MCF 10A (cell line): ENCODE measurements at regions of chr11 and their contacts with region 1.

Region 1: DNA sequence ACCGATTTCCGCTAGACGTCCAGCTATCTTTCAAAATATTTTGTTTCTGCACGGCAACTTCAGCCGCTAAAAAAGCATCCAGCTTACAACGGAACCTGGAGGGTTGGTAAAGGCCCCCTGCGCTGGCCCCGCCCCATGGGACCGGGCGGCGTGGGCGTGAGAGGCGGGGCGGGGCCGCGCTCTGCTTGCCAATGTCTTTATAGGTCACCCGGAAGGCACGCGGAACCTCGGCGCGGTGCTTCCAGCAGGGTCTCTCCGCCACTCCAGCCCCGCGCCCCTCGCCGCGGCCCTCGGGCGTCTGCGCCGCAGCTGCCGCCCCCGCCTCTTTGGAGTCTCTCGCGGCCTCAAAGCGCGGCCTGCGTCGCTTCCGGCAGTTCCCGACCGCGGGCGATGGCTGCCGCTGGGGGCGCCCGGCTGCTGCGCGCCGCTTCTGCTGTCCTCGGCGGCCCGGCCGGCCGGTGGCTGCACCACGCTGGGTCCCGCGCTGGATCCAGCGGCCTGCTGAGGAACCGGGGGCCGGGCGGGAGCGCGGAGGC is at the start of gene FDX1:
- DNase-seq: peak; percentile 80
- H3K4me3 Mint-ChIP-seq: peak within 1 kb of the TSS; percentile 97
- H3K27ac Mint-ChIP-seq: peak within 1 kb of the TSS; percentile 94
- H3K4me1 Mint-ChIP-seq: peaks cover 41% of the 10 kb centered on the region
- H3K27me3 Mint-ChIP-seq: no peaks in the 10 kb centered on the region
- CTCF ChIP-seq: peak; percentile 46
- total RNA-seq, gene FDX1: 19.9 and 21.1 TPM in 2 replicates

Region 2: GRCh38 chr11:109853156-109853776 is 576.5 kb before region 1 on chr11:
- CTCF ChIA-PET with region 1: no interaction called
- POLR2A ChIA-PET with region 1: no interaction called
- intact Hi-C with region 1: loop called (anchors 2 kb)
- DNase-seq: peak; percentile 73
- H3K4me3 Mint-ChIP-seq: no peak overlapping the region
- H3K27ac Mint-ChIP-seq: no peak overlapping the region
- H3K4me1 Mint-ChIP-seq: peaks cover 8% of the 10 kb centered on the region
- H3K27me3 Mint-ChIP-seq: no peaks in the 10 kb centered on the region
- CTCF ChIP-seq: peak; percentile 63

Region 3: DNA sequence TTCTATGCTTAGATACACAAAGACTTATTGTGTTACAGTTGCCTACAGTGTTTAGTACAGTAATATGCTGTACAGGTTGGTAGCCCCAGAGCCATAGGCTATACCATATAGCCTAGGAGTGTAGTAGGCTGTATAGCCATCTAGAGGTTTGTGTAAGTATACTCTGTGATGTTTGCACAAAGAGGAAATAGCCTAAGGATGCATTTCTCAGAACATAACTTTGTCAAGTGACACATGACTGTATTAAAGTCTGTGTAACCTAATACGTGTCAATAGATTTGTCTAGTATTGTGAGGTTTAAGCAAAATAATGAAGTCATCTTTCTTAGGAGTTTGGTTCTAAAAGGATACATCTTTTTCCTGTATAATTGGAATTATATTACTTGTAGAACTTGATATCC is 331.2 kb before region 1 on chr11:
- CTCF ChIA-PET with region 1: no interaction called
- POLR2A ChIA-PET with region 1: interaction called, 7 read pairs
- intact Hi-C with region 1: loop called (anchors 5 kb)
- DNase-seq: no peak
- H3K4me3 Mint-ChIP-seq: no peak overlapping the region
- H3K27ac Mint-ChIP-seq: peak overlapping the region; percentile 31
- H3K4me1 Mint-ChIP-seq: peaks cover 39% of the 10 kb centered on the region
- H3K27me3 Mint-ChIP-seq: no peaks in the 10 kb centered on the region
- CTCF ChIP-seq: no peak

Region 4: DNA sequence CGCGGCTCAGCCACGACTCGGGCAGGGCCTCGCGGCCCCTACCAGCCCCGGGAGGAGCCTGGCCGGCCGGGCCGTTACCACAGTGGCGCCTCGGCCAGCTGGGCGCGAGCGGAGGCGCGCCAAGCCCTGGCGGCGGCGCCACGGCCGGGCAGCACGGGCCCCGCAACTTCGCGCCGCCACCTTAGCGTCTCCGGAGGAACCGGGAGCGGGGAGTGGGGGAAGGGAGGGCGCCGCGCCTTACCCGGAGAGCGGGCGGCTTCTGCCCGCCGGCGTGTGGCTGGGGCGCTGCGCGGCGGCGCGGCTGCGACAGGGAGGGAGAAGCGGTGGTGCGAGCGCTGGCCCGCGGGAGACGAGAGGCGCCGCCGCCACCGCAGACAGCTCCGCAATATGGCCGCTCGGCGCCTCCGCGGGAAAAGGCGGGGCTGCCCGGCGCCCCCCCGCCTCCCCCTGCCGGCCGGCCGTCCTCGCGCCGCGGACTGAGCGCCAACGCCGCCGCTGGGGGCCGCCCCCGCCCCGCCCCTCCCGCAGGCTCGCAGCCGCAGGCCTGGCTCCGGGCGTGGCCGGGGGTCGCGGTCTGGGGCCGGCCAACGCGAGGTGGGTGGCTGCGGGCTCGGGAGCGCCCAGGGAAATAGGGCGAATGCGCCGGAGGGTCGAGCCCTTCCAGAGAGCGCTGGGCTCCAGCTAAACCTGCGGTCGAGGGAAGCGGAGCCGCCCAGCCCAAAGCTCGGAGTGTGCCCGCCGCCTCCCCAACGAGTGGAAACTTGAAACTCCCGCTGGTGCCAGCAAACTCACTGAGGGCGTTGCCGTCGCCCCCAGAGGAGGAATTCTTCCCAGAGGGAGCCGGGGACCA is 133.3 kb before region 1 on chr11 and contains the start of gene RDX:
- CTCF ChIA-PET with region 1: interaction called, 3 read pairs
- POLR2A ChIA-PET with region 1: interaction called, 18 read pairs
- intact Hi-C with region 1: loop called (anchors 1 kb)
- DNase-seq: peak; percentile 89
- H3K4me3 Mint-ChIP-seq: peak within 1 kb of the TSS; percentile 81
- H3K27ac Mint-ChIP-seq: peak within 1 kb of the TSS; percentile 69
- H3K4me1 Mint-ChIP-seq: peaks cover 18% of the 10 kb centered on the region
- H3K27me3 Mint-ChIP-seq: no peaks in the 10 kb centered on the region
- CTCF ChIP-seq: no peak
- total RNA-seq, gene RDX: 132 and 145 TPM in 2 replicates

Region 5: DNA sequence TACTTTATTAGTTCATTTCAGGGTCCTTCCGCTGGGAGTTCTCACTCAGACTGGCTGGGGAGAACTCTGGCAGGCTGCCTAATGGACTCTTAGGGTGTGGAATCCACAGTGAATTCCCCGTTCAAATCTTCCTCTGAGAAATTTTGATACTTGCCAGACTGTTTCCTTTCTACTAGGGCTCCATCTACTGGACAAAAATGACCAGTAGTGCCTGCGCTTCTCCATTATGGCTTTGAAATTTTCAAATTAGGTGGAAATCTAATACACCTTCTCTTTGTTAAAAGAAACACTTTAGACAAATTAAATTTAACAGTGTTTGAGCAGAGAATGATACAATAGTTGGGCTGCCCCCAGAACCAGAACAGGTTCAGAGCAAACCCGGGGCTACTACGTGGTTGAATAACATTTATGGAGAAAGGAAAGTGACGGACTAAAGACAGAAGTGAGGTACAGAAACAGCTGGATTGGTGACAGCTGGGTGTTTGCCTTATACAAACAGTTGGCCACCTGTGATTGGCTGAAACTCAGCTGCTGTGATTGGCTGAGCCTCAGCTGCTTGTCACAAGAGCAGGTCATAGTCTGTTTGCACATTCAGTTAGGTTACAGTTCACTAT is 53.0 kb before region 1 on chr11:
- CTCF ChIA-PET with region 1: interaction called, 30 read pairs
- POLR2A ChIA-PET with region 1: interaction called, 12 read pairs
- intact Hi-C with region 1: loop called (anchors 2 kb)
- DNase-seq: peak; percentile 84
- H3K4me3 Mint-ChIP-seq: no peak overlapping the region
- H3K27ac Mint-ChIP-seq: peak overlapping the region; percentile 61
- H3K4me1 Mint-ChIP-seq: peaks cover 16% of the 10 kb centered on the region
- H3K27me3 Mint-ChIP-seq: no peaks in the 10 kb centered on the region
- CTCF ChIP-seq: peak; percentile 52

Region 6: GRCh38 chr11:110447897-110448745 is 18.3 kb after region 1 on chr11:
- CTCF ChIA-PET with region 1: interaction called, 43 read pairs
- POLR2A ChIA-PET with region 1: interaction called, 3 read pairs
- intact Hi-C with region 1: no loop called
- DNase-seq: peak; percentile 39
- H3K4me3 Mint-ChIP-seq: no peak overlapping the region
- H3K27ac Mint-ChIP-seq: no peak overlapping the region
- H3K4me1 Mint-ChIP-seq: peaks cover 6% of the 10 kb centered on the region
- H3K27me3 Mint-ChIP-seq: no peaks in the 10 kb centered on the region
- CTCF ChIP-seq: peak; percentile 62